ENCODE measurements at regions of chr2 and their contacts with region 1.

Region 1: DNA sequence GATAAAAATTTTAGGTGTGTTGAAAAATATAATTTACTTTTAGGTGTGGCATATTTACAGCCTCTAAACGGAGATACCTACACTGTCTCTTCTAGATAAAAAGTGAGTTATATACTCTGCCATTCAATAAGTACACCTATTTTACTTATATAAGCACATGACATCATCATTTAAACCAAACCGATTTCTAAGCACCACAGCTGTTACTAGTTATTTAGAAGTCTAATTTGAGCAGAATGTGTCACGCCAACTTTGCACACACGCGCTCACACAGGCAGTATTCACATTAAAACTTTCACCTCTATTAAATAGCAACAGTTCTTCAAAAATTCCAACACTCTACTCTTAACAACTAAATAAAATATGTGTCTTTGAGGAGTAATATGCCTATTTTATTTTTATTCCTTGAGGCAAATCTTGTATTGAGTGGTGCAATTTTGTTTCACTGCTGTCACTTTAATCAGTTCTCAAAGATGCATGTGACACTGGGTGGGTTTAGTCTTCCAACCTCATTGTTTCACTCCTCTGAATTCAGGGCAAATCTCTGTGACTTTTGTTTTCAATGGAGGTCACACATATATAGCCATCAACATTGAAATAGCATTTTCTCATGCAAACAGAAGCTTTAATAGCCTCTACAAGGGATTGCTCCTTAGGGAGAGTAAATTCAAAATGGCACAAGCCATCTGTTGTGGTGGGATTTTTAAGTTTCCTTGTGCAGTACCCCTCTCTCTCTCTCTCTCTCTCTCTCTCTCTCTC is 721.0 kb downstream of the PLCL1 start:
- DNase-seq: no peak
- ATAC-seq: no peak
- H3K4me3 ChIP-seq: no peak overlapping the region
- H3K4me3 Mint-ChIP-seq: no peak overlapping the region
- H3K27ac ChIP-seq: no peak overlapping the region
- H3K27ac Mint-ChIP-seq: no peak overlapping the region
- H3K4me1 ChIP-seq: no peaks in the 10 kb centered on the region
- H3K4me1 Mint-ChIP-seq: no peaks in the 10 kb centered on the region
- H3K27me3 ChIP-seq: peaks cover 0 to 3% of the 10 kb centered on the region in 2 experiments
- H3K27me3 Mint-ChIP-seq: no peaks in the 10 kb centered on the region
- CTCF ChIP-seq: no peak

Region 2: DNA sequence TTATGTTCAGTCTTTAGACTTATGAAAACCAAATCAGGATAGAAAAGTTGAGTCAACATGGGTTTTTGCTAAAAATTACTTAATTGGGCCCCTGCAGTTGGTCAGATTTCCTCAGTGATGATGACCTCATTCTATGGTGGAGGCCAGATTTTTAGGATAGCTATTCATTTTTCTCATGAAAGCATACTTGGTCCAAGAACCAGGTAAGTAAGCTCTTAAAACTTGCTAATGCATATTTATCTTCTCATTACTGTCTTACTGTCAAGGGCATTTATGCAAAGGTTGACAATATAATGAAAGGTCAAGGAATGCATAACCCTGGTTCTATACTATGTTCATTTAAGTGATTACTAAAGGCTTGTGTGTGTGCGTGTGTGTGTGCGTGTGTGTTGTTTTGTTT is 281.7 kb after region 1 on chr2:
- CTCF ChIA-PET with region 1: no interaction called
- POLR2A ChIA-PET with region 1: no interaction called
- intact Hi-C with region 1: loop called in 1 of 2 experiments (anchors 5 kb)
- DNase-seq: no peak
- ATAC-seq: no peak
- H3K4me3 ChIP-seq: no peak overlapping the region
- H3K4me3 Mint-ChIP-seq: no peak overlapping the region
- H3K27ac ChIP-seq: no peak overlapping the region
- H3K27ac Mint-ChIP-seq: no peak overlapping the region
- H3K4me1 ChIP-seq: no peaks in the 10 kb centered on the region
- H3K4me1 Mint-ChIP-seq: no peaks in the 10 kb centered on the region
- H3K27me3 ChIP-seq: no peaks in the 10 kb centered on the region
- H3K27me3 Mint-ChIP-seq: no peaks in the 10 kb centered on the region
- CTCF ChIP-seq: no peak